ENCODE measurements at regions of chr3 and their contacts with region 1.

Region 1: DNA sequence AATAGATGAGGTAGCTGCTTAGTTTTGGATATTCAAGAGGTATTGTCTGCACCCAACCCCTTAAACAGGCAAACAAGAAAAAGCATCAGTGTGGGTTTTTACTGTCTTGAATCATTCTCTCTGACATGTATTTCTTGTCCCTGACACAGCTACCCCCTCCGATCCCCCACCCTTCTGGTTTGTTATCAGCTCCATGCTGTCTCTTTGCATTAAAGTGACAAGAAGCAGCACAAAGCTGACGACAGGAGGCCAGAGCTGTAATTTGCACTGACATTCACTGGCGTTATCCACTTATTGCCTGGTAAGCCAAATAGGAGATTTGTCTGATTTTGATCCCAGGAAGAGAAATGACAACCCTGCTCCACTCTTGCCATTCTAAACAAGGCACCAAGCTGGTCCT is 83.3 kb upstream of the SNRK start:
- DNase-seq: no peak
- ATAC-seq: no peak
- H3K4me3 Mint-ChIP-seq: no peak overlapping the region
- H3K27ac Mint-ChIP-seq: no peak overlapping the region
- H3K4me1 Mint-ChIP-seq: peaks cover 24% of the 10 kb centered on the region
- H3K27me3 Mint-ChIP-seq: no peaks in the 10 kb centered on the region
- CTCF ChIP-seq: no peak

Region 2: DNA sequence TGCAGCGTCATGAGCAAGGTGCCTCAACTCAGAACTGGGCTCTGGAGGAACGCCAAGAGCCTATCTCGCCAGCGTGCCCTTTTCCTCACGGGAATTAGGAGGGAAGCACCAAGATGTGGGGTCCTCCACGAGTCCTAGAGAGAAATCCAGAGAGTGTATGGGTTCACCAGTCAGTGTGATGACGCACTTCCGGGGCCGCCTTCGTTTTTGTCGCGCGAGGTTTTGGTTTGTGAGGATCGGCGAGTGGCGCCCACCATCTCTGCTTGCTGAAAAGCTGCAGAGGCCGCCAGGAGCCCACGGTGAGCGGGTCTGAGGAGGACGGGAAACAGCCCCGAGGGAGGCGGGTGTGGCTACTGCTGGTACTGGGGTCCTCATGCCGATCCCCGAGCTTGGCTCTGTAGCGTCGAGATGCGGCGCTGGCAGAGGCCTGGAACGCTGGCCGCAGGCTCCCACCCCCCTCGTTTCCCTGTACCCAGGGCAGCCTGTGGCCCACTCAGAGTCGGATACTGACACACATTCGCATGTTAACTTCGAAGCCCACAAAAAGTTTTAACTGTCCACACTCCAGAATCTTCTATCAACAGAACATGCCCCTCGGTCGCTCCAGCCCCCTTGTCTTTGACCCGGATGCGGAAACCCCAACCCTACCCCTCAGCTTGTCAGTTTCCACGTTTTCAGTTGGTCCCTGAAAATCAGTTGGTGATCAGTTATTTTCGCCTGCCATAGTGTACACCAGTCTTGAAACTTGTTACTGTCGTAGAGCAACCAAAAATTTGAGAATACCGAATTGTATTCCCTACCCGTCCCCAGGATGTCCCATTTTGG is 266.7 kb before region 1 on chr3:
- CTCF ChIA-PET with region 1: no interaction called
- POLR2A ChIA-PET with region 1: no interaction called
- intact Hi-C with region 1: no loop called
- DNase-seq: peak; percentile 10
- ATAC-seq: peak; percentile 17
- H3K4me3 Mint-ChIP-seq: no peak overlapping the region
- H3K27ac Mint-ChIP-seq: no peak overlapping the region
- H3K4me1 Mint-ChIP-seq: peaks cover 17% of the 10 kb centered on the region
- H3K27me3 Mint-ChIP-seq: no peaks in the 10 kb centered on the region
- CTCF ChIP-seq: no peak

Region 3: DNA sequence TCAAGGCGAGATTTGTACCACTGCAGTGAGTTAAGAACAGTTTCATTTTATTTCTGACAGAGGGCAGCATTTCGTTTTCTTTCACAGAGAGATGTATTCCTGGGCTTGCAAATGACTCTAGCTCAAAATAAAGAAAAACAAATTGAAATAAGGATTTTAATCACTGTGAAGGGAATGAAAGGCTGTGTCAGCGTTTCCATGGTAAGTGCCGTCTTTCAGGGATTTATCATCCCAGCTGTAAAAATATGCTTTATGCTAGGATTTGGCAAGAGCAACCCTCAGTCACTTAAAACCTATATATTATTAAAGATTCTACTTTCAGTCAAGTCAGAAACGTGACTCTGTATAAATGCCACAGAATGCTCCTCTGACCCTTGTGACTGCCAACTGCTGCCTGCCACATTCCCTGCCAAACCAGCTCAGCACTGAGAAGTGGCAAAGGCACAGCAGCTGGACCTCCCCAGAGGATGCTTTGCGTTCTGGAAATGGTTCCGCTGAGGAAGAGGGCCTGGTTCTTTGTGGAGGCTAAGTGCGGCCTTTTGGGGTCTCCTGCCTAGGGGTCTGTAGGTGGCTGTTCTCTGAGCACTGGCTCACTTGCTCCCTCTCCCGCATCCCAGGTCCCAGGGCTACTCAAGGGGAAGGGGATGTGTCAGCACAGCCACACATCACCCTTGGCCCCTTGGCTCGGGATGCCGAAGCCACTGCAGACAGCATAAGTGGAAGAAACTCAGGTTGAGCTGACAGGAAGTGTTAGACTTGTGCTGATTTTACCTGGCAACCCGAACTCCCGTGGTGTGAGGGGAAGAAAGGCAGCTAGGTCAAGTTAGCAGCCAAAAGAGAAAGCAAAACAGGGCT is 40.6 kb before region 1 on chr3:
- CTCF ChIA-PET with region 1: interaction called, 10 read pairs
- POLR2A ChIA-PET with region 1: no interaction called
- intact Hi-C with region 1: no loop called
- DNase-seq: peak; percentile 49
- ATAC-seq: peak; percentile 75
- H3K4me3 Mint-ChIP-seq: peak overlapping the region; percentile 65
- H3K27ac Mint-ChIP-seq: peak overlapping the region; percentile 96
- H3K4me1 Mint-ChIP-seq: peaks cover 20% of the 10 kb centered on the region
- H3K27me3 Mint-ChIP-seq: no peaks in the 10 kb centered on the region
- CTCF ChIP-seq: peak; percentile 58

Measured in activated CD8-positive, alpha-beta T cell treated with anti-CD3 and anti-CD28 coated beads for 36 hours (primary cell).